ENCODE measurements at regions of chr1 and their contacts with region 1.

Region 1: DNA sequence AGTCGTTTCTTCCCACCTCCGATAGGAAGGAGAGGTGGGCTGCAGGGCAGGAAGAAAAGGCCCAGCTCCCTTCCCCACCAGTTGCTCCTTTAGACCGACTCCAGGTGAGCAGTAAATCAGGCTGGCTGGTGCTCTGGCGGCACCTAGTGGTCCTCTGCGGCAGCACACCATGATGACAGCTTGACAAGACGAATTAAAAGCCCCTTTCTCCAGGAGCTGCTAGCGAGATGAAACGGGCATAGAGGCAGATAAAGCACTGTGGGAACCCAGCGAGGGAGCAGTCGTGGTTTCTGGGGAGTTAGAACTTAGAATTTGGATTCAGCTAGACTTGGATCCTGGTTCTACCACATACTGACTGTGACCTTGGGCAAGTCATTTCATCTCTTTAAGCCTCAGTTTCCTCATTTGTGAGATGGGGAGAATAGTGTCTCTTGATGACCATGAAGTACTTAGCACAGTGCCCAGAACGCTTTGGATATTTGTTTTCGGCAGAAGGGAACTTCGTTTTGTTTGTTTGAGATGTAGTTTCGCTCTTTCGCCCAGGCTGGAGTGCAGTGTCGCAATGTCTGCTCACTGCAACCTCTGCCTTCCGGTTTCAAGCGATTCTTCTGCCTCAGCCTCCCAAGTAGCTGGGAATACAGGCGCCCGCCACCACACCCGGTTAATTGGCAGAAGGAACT is 21.8 kb upstream of the COL9A2 start:
- DNase-seq: peak; percentile 40 to 96 (median 80)

Region 2: DNA sequence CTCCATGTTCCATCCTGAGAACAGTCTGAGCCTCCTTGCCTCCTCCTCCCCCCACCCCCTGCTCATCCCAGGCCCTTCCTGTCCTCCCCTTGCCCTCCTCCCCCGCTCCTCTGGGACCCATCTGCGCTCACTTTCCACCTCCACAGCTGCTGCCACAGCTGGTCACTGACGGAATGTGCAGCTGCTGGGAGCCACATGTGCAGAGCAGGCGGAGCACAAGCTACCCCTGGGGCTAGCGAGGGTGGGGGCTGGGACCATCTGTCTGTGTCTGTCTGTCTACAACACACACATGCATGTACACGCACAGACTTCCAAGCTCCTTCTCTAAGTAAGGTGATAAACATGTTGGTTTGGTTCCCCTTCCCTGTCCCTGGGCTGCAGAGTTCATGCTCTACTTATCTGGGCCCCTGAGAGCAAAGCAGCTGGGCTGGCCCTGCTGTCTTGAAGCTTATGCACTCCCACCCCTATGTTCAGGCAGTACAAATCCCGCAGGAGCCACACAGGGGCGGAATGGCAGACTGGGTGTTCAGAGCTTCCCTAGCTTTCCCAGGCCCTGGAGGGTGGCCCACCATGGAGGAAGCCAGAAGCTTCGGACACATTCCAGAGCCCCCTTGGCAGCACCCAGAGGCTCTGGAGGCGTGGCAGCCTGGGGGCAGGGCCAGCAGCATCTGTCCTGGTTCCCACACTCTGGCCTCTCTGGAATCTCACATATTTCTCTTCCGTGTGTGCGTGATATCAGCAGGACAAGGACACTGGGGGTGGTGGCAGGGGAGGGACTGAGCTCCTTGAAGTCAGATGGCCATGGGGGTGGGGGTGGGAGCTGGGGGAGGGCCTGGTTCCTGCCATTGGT is 692.4 kb before region 1 on chr1:
- intact Hi-C with region 1: no loop called
- DNase-seq: peak in 2 of 10 donors; percentile 59 to 67

Region 3: GRCh38 chr1:40153073-40153770 is 185.7 kb before region 1 on chr1:
- intact Hi-C with region 1: loop called (anchors 2 kb)
- DNase-seq: no peak

Region 4: DNA sequence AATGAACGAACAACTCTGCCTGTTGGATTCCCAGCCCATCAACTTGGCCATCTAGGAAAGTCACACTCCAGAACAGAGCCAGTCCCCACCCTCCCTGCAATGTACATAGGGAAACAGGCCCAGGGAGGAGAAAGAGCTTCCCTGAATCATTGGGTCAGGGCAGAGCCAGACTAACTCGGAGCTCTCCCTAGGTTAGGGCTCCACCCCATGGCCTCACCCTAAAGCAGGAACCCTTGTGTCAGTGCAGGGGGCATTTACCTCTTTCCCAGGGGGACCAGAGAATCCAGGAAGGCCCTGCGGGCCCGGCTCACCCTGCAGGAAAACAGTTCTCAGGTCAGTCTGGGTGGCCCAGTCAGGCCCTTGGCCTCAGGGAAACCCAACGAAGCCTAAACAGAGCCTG is 33.4 kb before region 1 on chr1:
- intact Hi-C with region 1: no loop called
- DNase-seq: peak in 2 of 10 donors; percentile 42 to 43